PC-3 (cell line): ENCODE measurements at regions of chr1 and their contacts with region 1.

Region 1: DNA sequence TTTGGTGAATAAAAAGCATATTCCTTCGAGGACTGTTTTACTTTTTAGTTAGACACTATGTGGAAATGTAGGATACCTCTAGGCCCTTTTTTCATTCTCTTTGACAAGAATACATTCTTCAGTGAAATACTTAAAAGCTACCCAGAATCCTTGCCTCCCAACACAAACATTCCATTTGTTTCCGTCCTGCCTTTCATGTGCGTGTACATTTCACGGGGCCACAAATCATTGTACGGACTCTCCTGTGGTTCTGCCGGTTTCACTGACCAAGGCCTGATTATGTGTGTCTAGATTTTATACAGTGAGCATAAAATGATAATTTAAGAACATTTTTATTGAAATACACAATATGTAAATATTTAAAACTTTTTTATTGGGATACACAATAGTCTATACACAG is 76.4 kb downstream of the RUNX3 start:
- DNase-seq: no peak
- ATAC-seq: no peak
- H3K4me3 ChIP-seq: no peak overlapping the region
- H3K27ac ChIP-seq: no peak overlapping the region
- H3K4me1 ChIP-seq: no peaks in the 10 kb centered on the region; the same call in 1 of the 2 replicates
- H3K27me3 ChIP-seq: no peaks in the 10 kb centered on the region
- CTCF ChIP-seq: no peak

Region 2: GRCh38 chr1:25031966-25032667 is 178.5 kb after region 1 on chr1:
- CTCF ChIA-PET with region 1: no interaction called
- POLR2A ChIA-PET with region 1: no interaction called
- intact Hi-C with region 1: loop called (anchors 2 kb)
- DNase-seq: peak; percentile 85
- ATAC-seq: peak; percentile 88
- H3K4me3 ChIP-seq: no peak overlapping the region
- H3K27ac ChIP-seq: peak overlapping the region; percentile 40
- H3K4me1 ChIP-seq: peaks cover 21% of the 10 kb centered on the region
- H3K27me3 ChIP-seq: no peaks in the 10 kb centered on the region
- CTCF ChIP-seq: peak; percentile 29